Posterior cingulate gyrus (tissue), 11 donors: ENCODE measurements at regions of chr6 and their contacts with region 1.

Region 1: GRCh38 chr6:70310063-70310694 is 7.3 kb upstream of the COL9A1 start:
- DNase-seq: no peak

Region 2: DNA sequence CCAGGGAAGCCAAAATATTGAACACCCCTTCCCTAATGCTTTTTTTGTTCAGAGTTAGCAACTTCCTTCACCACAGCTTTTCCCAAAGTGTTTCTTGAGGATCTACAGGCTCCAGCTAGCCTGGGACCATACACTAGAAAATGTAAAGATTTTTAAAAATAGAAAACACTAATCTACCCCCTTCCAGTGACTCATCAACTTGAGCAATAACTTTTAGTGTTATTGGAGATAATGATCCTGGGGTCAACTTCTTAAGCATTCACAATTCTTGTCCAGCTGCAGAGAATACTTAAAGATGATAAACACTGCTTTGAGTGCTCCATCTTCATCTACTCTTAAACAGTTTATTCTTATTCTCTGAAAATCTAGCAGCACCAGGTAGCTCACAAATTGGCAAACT is 138.9 kb before region 1 on chr6:
- intact Hi-C with region 1: no loop called
- DNase-seq: no peak

Region 3: GRCh38 chr6:70369332-70369950 is 59.3 kb after region 1 on chr6:
- intact Hi-C with region 1: loop called (anchors 1 kb)
- DNase-seq: peak; percentile 30 to 95 (median 72)

Region 4: GRCh38 chr6:70686548-70687133 is 376.5 kb after region 1 on chr6:
- intact Hi-C with region 1: loop called (anchors 5 kb)
- DNase-seq: no peak

Region 5: GRCh38 chr6:71012866-71013469 is 702.8 kb after region 1 on chr6:
- intact Hi-C with region 1: loop called (anchors 10 kb)
- DNase-seq: peak in 1 of 10 donors; percentile 11